HEK293 (cell line): ENCODE measurements at regions of chr10 and their contacts with region 1.

Region 1: GRCh38 chr10:97278491-97278989 is 13.9 kb downstream of the ARHGAP19 start:
- H3K4me3 ChIP-seq: no peak overlapping the region
- H3K27ac ChIP-seq: no peak overlapping the region
- H3K4me1 ChIP-seq: peaks cover 5% of the 10 kb centered on the region; the same call in 1 of the 2 replicates
- CTCF ChIP-seq: 0 out of 2 replicates have a peak, but pooled peaks have one; percentile 9

Region 2: DNA sequence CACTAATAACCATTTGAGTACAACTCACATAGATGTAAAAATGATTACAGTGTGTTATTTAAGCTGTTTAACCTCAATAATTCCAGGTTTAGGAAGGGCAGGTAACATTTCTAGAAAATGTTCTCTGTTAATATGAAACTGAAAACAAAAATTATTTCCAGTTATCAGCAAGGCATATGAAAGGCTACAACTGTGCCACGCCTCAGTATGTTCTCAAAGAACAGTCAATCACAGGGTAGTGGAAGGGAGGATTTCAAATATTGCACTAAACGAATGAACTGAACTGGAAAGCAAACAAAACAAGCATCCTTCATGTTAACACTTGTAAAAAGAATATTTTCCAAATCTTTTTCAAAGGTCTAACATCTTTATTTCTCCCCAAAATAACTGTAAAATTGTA is 17.4 kb before region 1 on chr10:
- CTCF ChIA-PET with region 1: interaction called, 17 read pairs
- POLR2A ChIA-PET with region 1: no interaction called
- H3K4me3 ChIP-seq: no peak overlapping the region
- H3K27ac ChIP-seq: no peak overlapping the region
- H3K4me1 ChIP-seq: no peaks in the 10 kb centered on the region
- CTCF ChIP-seq: no peak

Region 3: GRCh38 chr10:97292097-97292862 is 13.7 kb after region 1 on chr10 and contains the start of gene ARHGAP19:
- CTCF ChIA-PET with region 1: interaction called, 18 read pairs
- POLR2A ChIA-PET with region 1: interaction called, 8 read pairs
- H3K4me3 ChIP-seq: peak within 1 kb of the TSS; percentile 62
- H3K27ac ChIP-seq: peak within 1 kb of the TSS; percentile 86
- H3K4me1 ChIP-seq: no peaks in the 10 kb centered on the region
- CTCF ChIP-seq: peak; percentile 90

Region 4: DNA sequence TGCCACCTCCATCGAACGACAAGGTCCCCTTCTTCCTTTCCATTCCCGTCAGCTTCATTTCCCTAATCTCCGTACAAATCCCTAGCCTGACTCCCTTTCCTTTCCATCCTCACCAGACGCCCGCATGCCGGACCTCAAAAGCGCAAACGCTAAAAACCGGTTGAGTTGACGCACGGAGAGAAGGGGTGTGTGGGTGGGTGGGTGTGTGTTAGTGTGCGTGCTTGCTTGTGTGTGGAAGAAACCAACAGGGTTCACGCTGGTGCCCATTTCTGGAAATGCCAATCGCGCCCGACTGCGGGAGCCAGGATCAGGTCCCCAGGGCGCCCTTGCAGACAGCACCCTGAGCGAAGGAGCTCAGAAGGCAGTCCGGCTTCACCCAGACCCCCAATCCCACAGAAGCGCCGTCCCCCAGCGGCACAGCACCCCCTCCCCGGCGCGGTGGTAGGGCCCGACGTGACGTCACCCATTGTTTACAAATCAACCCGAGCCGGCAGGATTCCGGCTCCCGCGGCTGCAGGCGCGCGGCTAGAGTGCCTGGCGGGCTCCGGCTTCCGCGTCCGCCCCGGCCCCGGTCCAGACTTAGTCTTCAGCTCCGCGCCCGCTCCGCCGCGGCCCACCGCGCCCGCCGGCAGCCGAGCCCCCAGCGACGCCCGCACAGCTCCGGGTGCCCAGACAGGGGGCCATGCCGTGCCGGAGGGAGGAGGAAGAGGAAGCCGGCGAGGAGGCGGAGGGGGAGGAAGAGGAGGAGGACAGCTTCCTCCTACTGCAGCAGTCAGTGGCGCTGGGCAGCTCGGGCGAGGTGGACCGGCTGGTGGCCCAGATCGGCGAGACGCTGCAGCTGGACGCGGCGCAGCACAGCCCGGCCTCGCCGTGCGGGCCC is 40.5 kb after region 1 on chr10 and contains the start of gene FRAT1:
- CTCF ChIA-PET with region 1: interaction called, 18 read pairs
- POLR2A ChIA-PET with region 1: interaction called, 3 read pairs
- H3K4me3 ChIP-seq: peak within 1 kb of the TSS; percentile 57
- H3K27ac ChIP-seq: peak within 1 kb of the TSS; percentile 100
- H3K4me1 ChIP-seq: no peaks in the 10 kb centered on the region; the same call in 1 of the 2 replicates
- CTCF ChIP-seq: no peak

Region 5: GRCh38 chr10:97334370-97335175 is 56.0 kb after region 1 on chr10 and contains the start of gene FRAT2:
- CTCF ChIA-PET with region 1: interaction called, 40 read pairs
- POLR2A ChIA-PET with region 1: interaction called, 3 read pairs
- H3K4me3 ChIP-seq: peak within 1 kb of the TSS; percentile 66
- H3K27ac ChIP-seq: peak within 1 kb of the TSS; percentile 99
- H3K4me1 ChIP-seq: peaks cover 18% of the 10 kb centered on the region
- CTCF ChIP-seq: no peak

Region 6: DNA sequence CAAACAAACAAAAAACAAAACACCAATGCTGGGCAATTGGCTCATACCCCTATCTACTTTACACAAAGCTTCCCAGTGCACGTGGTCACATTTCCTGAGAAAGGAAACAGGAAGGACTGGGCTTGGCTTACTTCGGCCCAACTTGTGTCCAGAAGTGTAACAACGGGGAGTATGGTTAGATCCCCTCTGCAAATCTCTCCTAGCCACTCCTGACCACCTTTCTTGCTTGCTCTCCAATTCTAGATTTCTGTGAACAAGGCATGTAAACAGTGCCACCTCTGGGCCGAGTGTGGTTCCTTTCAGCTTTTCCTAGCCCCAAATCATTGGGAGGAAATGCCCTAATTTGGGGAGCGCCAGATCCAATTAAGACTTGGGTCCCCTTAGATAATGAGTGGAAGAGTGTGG is 77.0 kb after region 1 on chr10:
- CTCF ChIA-PET with region 1: interaction called, 12 read pairs
- POLR2A ChIA-PET with region 1: no interaction called
- H3K4me3 ChIP-seq: no peak overlapping the region
- H3K27ac ChIP-seq: no peak overlapping the region
- H3K4me1 ChIP-seq: no peaks in the 10 kb centered on the region
- CTCF ChIP-seq: peak; percentile 63